ENCODE measurements at regions of chr1 and their contacts with region 1.

Region 1: GRCh38 chr1:178501705-178502329 is 5.1 kb upstream of the CLEC20A start:
- H3K4me3 ChIP-seq: no peak overlapping the region
- H3K27ac ChIP-seq: no peak overlapping the region
- H3K4me1 ChIP-seq: no peaks in the 10 kb centered on the region
- CTCF ChIP-seq: peak; percentile 56; the same call in 1 of the 2 replicates

Region 2: GRCh38 chr1:178310685-178311105 is 191.1 kb before region 1 on chr1:
- CTCF ChIA-PET with region 1: interaction called, 63 read pairs
- POLR2A ChIA-PET with region 1: interaction called, 3 read pairs
- H3K4me3 ChIP-seq: no peak overlapping the region
- H3K27ac ChIP-seq: no peak overlapping the region
- H3K4me1 ChIP-seq: no peaks in the 10 kb centered on the region
- CTCF ChIP-seq: peak; percentile 39; the same call in 1 of the 2 replicates

Region 3: GRCh38 chr1:178344513-178345082 is 157.2 kb before region 1 on chr1:
- CTCF ChIA-PET with region 1: interaction called, 30 read pairs
- POLR2A ChIA-PET with region 1: no interaction called
- H3K4me3 ChIP-seq: no peak overlapping the region
- H3K27ac ChIP-seq: no peak overlapping the region
- H3K4me1 ChIP-seq: peaks cover 9% of the 10 kb centered on the region; the same call in 1 of the 2 replicates
- CTCF ChIP-seq: no peak

Region 4: DNA sequence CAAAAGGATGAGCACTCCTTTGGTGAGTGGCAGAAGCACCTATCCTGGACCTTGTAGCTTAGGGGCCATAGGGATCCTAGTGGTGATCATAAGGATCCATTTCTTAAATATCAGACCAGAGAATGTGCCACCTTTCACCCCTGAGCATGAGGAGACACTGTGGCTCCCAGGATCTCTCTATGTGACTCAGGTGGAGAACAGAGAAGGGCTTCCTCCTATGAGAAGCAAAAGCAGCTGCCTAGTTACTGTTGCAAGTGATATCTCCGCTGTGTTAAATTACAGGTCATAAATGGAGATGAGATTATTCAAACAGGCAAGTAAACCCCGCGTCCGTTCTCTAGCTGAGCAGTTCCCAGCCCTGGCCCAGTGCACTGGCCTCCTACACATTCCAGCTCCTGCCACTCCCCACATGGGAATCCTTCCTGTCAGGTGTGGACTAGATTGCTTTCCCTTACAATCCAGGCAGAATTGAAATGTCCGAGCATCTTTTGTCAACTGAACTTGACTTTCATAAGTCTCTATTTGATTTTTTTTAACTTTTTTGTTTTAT is 31.3 kb before region 1 on chr1:
- CTCF ChIA-PET with region 1: interaction called, 22 read pairs
- POLR2A ChIA-PET with region 1: no interaction called
- H3K4me3 ChIP-seq: no peak overlapping the region
- H3K27ac ChIP-seq: no peak overlapping the region
- H3K4me1 ChIP-seq: no peaks in the 10 kb centered on the region
- CTCF ChIP-seq: no peak

Region 5: GRCh38 chr1:178513278-178514022 is 11.6 kb after region 1 on chr1:
- CTCF ChIA-PET with region 1: interaction called, 52 read pairs
- POLR2A ChIA-PET with region 1: no interaction called
- H3K4me3 ChIP-seq: no peak overlapping the region
- H3K27ac ChIP-seq: no peak overlapping the region
- H3K4me1 ChIP-seq: no peaks in the 10 kb centered on the region
- CTCF ChIP-seq: no peak

Region 6: GRCh38 chr1:178532392-178532791 is 30.6 kb after region 1 on chr1:
- CTCF ChIA-PET with region 1: interaction called, 21 read pairs
- POLR2A ChIA-PET with region 1: no interaction called
- H3K4me3 ChIP-seq: no peak overlapping the region
- H3K27ac ChIP-seq: no peak overlapping the region
- H3K4me1 ChIP-seq: no peaks in the 10 kb centered on the region; the same call in 1 of the 2 replicates
- CTCF ChIP-seq: peak; percentile 77